CD4-positive, alpha-beta T cell (primary cell): ENCODE measurements at regions of chr1 and their contacts with region 1.

Region 1: GRCh38 chr1:155227261-155228095 is 19.0 kb downstream of the MTX1 start:
- DNase-seq: peak; percentile 96 to 100 (median 98)
- ATAC-seq: peak; percentile 93
- H3K4me3 ChIP-seq: peak overlapping the region; percentile 75
- H3K4me3 Mint-ChIP-seq: peak overlapping the region; percentile 72
- H3K27ac ChIP-seq: peak overlapping the region; percentile 82 to 87
- H3K27ac Mint-ChIP-seq: peak overlapping the region; percentile 74
- H3K4me1 ChIP-seq: peaks cover 25% of the 10 kb centered on the region
- H3K4me1 Mint-ChIP-seq: peaks cover 26% of the 10 kb centered on the region
- H3K27me3 ChIP-seq: no peaks in the 10 kb centered on the region
- H3K27me3 Mint-ChIP-seq: no peaks in the 10 kb centered on the region
- CTCF ChIP-seq: no peak

Region 2: GRCh38 chr1:155105604-155106022 is 121.9 kb before region 1 on chr1:
- CTCF ChIA-PET with region 1: no interaction called
- POLR2A ChIA-PET with region 1: no interaction called
- intact Hi-C with region 1: no loop called
- DNase-seq: no peak
- ATAC-seq: no peak
- H3K4me3 ChIP-seq: no peak overlapping the region
- H3K4me3 Mint-ChIP-seq: no peak overlapping the region
- H3K27ac ChIP-seq: no peak overlapping the region
- H3K27ac Mint-ChIP-seq: no peak overlapping the region
- H3K4me1 ChIP-seq: no peaks in the 10 kb centered on the region
- H3K4me1 Mint-ChIP-seq: no peaks in the 10 kb centered on the region
- H3K27me3 ChIP-seq: peaks cover 0 to 3% of the 10 kb centered on the region in 2 experiments
- H3K27me3 Mint-ChIP-seq: peaks cover 4% of the 10 kb centered on the region
- CTCF ChIP-seq: no peak

Region 3: GRCh38 chr1:155193275-155193990 is 34.0 kb before region 1 on chr1:
- CTCF ChIA-PET with region 1: interaction called, 23 read pairs
- POLR2A ChIA-PET with region 1: interaction called, 16 read pairs
- intact Hi-C with region 1: loop called (anchors 5 kb)
- DNase-seq: peak; percentile 31 to 81 (median 62)
- ATAC-seq: peak; percentile 27
- H3K4me3 ChIP-seq: peak overlapping the region; percentile 62
- H3K4me3 Mint-ChIP-seq: peak overlapping the region; percentile 96
- H3K27ac ChIP-seq: peak overlapping the region; percentile 21 to 89
- H3K27ac Mint-ChIP-seq: peak overlapping the region; percentile 96
- H3K4me1 ChIP-seq: peaks cover 38% of the 10 kb centered on the region
- H3K4me1 Mint-ChIP-seq: peaks cover 27% of the 10 kb centered on the region
- H3K27me3 ChIP-seq: no peaks in the 10 kb centered on the region
- H3K27me3 Mint-ChIP-seq: no peaks in the 10 kb centered on the region
- CTCF ChIP-seq: peak; percentile 97

Region 4: DNA sequence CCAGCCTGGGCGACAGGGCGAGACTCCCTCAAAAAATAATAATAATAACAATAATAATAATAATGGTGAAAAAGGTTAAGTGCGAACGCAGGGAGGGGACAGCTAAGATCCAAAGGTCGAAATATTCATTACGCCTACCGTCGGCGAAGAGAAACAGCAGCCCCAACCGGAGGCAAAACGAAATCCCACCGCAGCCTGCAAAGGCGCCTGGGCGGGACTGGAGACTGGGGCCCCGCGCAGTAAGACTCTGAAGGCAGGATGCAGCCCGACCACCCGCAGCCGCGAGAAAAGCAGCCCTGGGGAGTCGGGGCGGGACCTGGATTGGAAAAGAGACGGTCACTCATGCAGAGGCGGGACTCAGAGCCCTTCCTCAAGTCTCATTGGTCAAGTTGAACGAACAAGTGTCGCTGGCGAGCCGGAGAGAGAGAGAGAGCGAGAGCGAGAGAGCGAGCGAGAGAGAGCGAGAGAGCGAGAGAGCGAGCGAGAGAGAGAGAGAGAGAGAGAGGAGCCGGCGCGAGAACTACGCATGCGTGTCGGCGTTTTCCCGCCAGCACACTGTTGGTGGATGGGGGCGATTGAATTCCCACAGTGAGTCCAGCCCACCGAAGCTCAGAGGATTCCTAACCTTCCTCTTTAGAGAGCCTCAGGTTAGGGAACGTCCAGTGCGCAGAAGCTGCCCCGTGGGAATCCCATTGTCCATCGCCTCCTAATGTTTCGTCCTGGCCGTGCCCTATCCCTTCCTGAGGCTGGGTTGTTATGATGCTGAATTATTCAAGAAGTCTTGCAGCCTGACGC is 17.1 kb after region 1 on chr1:
- CTCF ChIA-PET with region 1: interaction called, 10 read pairs
- POLR2A ChIA-PET with region 1: interaction called, 11 read pairs
- intact Hi-C with region 1: loop called (anchors 1 to 2 kb)
- DNase-seq: peak; percentile 83 to 98 (median 91)
- ATAC-seq: peak; percentile 92
- H3K4me3 ChIP-seq: peak overlapping the region; percentile 68
- H3K4me3 Mint-ChIP-seq: peak overlapping the region; percentile 90
- H3K27ac ChIP-seq: peak overlapping the region; percentile 61 to 66
- H3K27ac Mint-ChIP-seq: peak overlapping the region; percentile 96
- H3K4me1 ChIP-seq: peaks cover 46% of the 10 kb centered on the region
- H3K4me1 Mint-ChIP-seq: peaks cover 47% of the 10 kb centered on the region
- H3K27me3 ChIP-seq: no peaks in the 10 kb centered on the region
- H3K27me3 Mint-ChIP-seq: peaks cover 5% of the 10 kb centered on the region
- CTCF ChIP-seq: peak; percentile 56